Naive thymus-derived CD4-positive, alpha-beta T cell (primary cell): ENCODE measurements at regions of chr1 and their contacts with region 1.

Region 1: DNA sequence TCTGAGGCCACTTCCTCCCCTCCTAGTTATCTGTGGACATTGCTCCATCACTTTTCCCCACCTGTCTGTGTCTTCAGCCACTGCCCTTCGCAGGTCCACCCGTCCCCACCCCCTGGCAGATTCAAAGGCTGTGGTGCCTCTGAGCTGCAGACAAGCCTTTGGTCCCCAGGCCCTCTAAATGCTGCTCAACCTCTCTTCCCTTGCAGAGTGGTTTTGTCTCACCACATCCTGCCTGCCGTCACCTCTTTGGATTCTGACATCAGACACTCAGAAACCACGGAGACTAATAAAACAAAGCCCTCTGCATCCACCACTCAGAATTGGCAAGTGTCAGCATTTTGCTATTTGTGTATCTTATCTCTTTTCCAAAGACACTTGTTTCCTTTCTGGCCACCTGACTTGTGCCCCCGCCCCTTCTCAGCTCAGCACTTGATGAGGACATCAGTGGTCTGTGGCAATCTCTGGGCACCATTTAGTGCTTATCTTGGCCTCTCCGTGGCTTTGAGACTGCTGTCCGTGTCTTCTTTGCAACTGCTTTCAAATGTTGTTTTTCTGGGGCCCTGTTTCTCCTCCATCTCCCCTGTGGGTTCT is 7.7 kb downstream of the CNIH3 start:
- DNase-seq: peak in 8 of 9 donors; percentile 70 to 89 (median 83)
- ATAC-seq: peak; percentile 93
- H3K4me3 ChIP-seq: peak overlapping the region; percentile 40
- H3K4me3 Mint-ChIP-seq: peak overlapping the region; percentile 58 to 80 (median 72)
- H3K27ac ChIP-seq: no peak overlapping the region
- H3K27ac Mint-ChIP-seq: peak overlapping the region; percentile 66 to 95 (median 90)
- H3K4me1 ChIP-seq: peaks cover 18 to 25% of the 10 kb centered on the region in 2 donors
- H3K4me1 Mint-ChIP-seq: peaks cover 22 to 47% (median 31%) of the 10 kb centered on the region in 7 donors
- H3K27me3 ChIP-seq: no peaks in the 10 kb centered on the region
- H3K27me3 Mint-ChIP-seq: peaks cover 40 to 45% (median 44%) of the 10 kb centered on the region in 5 donors

Region 2: GRCh38 chr1:223712194-223712849 is 911.5 kb before region 1 on chr1 and contains the start of gene CAPN2:
- CTCF ChIA-PET with region 1: no interaction called
- POLR2A ChIA-PET with region 1: no interaction called
- intact Hi-C with region 1: loop called in 1 of 2 experiments (anchors 10 kb)
- DNase-seq: peak; percentile 29 to 78 (median 51)
- ATAC-seq: peak; percentile 78
- H3K4me3 ChIP-seq: peak within 1 kb of the TSS; percentile 61
- H3K4me3 Mint-ChIP-seq: peak within 1 kb of the TSS; percentile 70 to 93 (median 84)
- H3K27ac ChIP-seq: peak within 1 kb of the TSS; percentile 83
- H3K27ac Mint-ChIP-seq: peak within 1 kb of the TSS; percentile 82 to 93 (median 88)
- H3K4me1 ChIP-seq: peaks cover 48 to 53% of the 10 kb centered on the region in 2 donors
- H3K4me1 Mint-ChIP-seq: peaks cover 52 to 69% (median 63%) of the 10 kb centered on the region in 7 donors
- H3K27me3 ChIP-seq: no peaks in the 10 kb centered on the region
- H3K27me3 Mint-ChIP-seq: peaks cover 0 to 8% (median 0%) of the 10 kb centered on the region in 5 donors
- total RNA-seq, gene CAPN2: 86.1 to 195 (median 117) TPM

Region 3: DNA sequence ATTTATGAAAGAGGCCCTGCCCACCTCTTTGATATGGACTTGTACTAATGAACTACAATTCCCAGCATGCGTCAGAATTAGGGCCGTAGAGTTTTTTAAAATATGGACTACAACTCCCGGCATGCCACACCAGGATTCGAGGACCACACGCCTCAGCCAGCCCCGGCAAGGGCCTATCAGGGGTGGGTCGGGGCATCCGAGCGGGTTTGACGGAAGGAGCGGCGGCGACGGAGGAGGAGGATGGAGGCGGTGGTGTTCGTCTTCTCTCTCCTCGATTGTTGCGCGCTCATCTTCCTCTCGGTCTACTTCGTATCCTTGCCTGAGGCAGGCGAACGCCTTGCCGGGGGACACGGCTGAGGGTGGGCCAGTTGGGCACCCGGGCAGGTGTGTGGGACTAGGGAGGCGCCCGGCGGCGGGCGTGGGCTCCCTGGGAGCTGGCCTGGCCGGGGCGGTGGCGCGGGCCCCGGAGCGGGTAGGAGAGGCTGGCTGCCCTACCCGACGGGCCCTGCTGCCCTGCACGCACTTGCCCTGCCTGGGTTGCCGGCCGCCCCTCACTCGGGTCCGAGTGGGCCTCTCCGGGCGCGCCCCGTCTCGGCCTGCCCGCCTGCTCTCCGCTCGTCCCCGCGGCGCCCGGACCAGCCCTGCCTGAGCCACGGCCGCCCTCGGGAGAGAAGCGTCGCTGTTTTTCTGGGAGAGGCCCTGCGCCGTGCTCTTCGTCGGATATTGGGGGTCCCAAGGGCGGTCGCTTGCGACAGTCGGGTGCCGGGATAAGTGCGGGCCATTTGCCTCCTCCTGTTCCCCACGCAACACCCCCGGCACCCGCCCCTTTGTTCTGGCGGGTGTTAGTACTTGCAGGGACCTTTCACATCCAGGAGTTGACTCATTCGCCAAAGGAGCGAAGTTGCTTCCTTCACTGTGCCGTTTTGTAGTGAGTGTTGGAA is 266.9 kb before region 1 on chr1 and contains the start of gene CNIH4:
- CTCF ChIA-PET with region 1: no interaction called
- POLR2A ChIA-PET with region 1: no interaction called
- intact Hi-C with region 1: loop called in 1 of 2 experiments (anchors 10 kb)
- DNase-seq: peak; percentile 79 to 95 (median 92)
- ATAC-seq: peak; percentile 99
- H3K4me3 ChIP-seq: peak within 1 kb of the TSS; percentile 67
- H3K4me3 Mint-ChIP-seq: peak within 1 kb of the TSS; percentile 87 to 98 (median 94)
- H3K27ac ChIP-seq: peak within 1 kb of the TSS; percentile 83
- H3K27ac Mint-ChIP-seq: peak within 1 kb of the TSS; percentile 71 to 95 (median 89)
- H3K4me1 ChIP-seq: peaks cover 16 to 27% of the 10 kb centered on the region in 2 donors
- H3K4me1 Mint-ChIP-seq: peaks cover 23 to 58% (median 44%) of the 10 kb centered on the region in 7 donors
- H3K27me3 ChIP-seq: no peaks in the 10 kb centered on the region
- H3K27me3 Mint-ChIP-seq: no peaks in the 10 kb centered on the region
- total RNA-seq, gene CNIH4: 28.1 to 42.0 (median 39.8) TPM

Region 4: DNA sequence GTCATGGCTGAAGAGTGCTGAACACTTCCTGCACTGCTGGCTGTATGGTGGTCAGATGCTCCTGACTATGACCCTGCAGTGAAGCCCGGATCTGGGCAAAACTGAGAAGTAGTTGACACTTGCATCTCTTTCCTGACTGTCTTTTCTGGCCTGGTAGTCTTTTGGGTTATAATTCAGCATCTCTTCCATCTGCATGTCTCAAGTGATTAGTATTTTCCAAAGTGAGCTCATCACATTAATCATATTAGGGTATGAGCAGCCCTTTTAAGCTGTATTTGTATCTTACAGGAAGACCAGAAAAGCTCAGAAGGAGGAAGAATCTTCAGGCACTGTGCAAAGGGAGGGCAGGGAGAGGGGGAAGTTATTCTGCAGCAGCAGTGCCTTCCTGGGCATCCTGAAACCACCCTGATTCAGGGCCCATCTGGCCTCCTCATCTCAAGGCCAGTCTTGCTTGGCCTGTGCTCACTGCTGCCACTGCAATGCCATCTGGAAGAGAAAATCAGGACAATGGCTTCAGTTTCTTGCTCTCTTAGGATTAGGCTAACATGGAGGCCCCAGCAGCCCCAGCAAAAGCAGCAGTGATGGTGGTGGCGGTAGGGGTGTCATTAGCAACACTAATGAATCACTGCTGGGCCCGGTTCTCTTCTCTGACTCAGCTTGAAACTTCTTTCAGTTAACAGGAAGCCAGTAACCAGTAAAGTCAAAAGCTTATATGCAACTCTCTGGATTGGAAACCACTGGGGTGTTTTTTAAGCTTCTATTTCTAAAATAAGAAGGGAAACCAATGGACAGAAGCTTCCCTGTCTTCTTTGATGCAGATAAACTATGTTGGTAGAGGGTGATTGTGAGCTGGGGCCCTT is 125.9 kb before region 1 on chr1:
- CTCF ChIA-PET with region 1: no interaction called
- POLR2A ChIA-PET with region 1: no interaction called
- intact Hi-C with region 1: loop called in 1 of 2 experiments (anchors 1 kb)
- DNase-seq: peak in 1 of 9 donors; percentile 62
- ATAC-seq: peak; percentile 88
- H3K4me3 ChIP-seq: no peak overlapping the region
- H3K4me3 Mint-ChIP-seq: peak overlapping the region in 2 of 10 donors; percentile 34 to 67
- H3K27ac ChIP-seq: no peak overlapping the region
- H3K27ac Mint-ChIP-seq: peak overlapping the region in 5 of 9 donors; percentile 19 to 91 (median 55)
- H3K4me1 ChIP-seq: peaks cover 0 to 14% of the 10 kb centered on the region in 2 donors
- H3K4me1 Mint-ChIP-seq: peaks cover 19 to 55% (median 25%) of the 10 kb centered on the region in 7 donors
- H3K27me3 ChIP-seq: no peaks in the 10 kb centered on the region
- H3K27me3 Mint-ChIP-seq: no peaks in the 10 kb centered on the region

Region 5: GRCh38 chr1:224542783-224543440 is 80.9 kb before region 1 on chr1:
- CTCF ChIA-PET with region 1: no interaction called
- POLR2A ChIA-PET with region 1: no interaction called
- intact Hi-C with region 1: loop called in 1 of 2 experiments (anchors 5 kb)
- DNase-seq: peak in 1 of 9 donors; percentile 24
- ATAC-seq: peak; percentile 92
- H3K4me3 ChIP-seq: no peak overlapping the region
- H3K4me3 Mint-ChIP-seq: peak overlapping the region in 1 of 10 donors; percentile 46
- H3K27ac ChIP-seq: no peak overlapping the region
- H3K27ac Mint-ChIP-seq: peak overlapping the region in 1 of 9 donors; percentile 62
- H3K4me1 ChIP-seq: no peaks in the 10 kb centered on the region
- H3K4me1 Mint-ChIP-seq: peaks cover 0 to 23% (median 5%) of the 10 kb centered on the region in 7 donors
- H3K27me3 ChIP-seq: no peaks in the 10 kb centered on the region
- H3K27me3 Mint-ChIP-seq: peaks cover 9 to 23% (median 15%) of the 10 kb centered on the region in 5 donors

Region 6: GRCh38 chr1:224644553-224645154 is 20.8 kb after region 1 on chr1:
- CTCF ChIA-PET with region 1: interaction called, 4 read pairs
- POLR2A ChIA-PET with region 1: no interaction called
- intact Hi-C with region 1: loop called in 1 of 2 experiments (anchors 1 kb)
- DNase-seq: peak; percentile 16 to 65 (median 53)
- ATAC-seq: peak; percentile 78
- H3K4me3 ChIP-seq: no peak overlapping the region
- H3K4me3 Mint-ChIP-seq: no peak overlapping the region
- H3K27ac ChIP-seq: no peak overlapping the region
- H3K27ac Mint-ChIP-seq: no peak overlapping the region
- H3K4me1 ChIP-seq: no peaks in the 10 kb centered on the region
- H3K4me1 Mint-ChIP-seq: peaks cover 0 to 8% (median 0%) of the 10 kb centered on the region in 7 donors
- H3K27me3 ChIP-seq: no peaks in the 10 kb centered on the region
- H3K27me3 Mint-ChIP-seq: peaks cover 0 to 14% (median 6%) of the 10 kb centered on the region in 5 donors